Activated T-helper 2 cell treated with anti-CD3 and anti-CD28 coated beads, Interferon-gamma antibody, Interleukin-2, Interleukin-4, amounts not matched to agents 10 μg/mL and 5 μg/mL and 100 μg/mL, durations not matched to agents 14 hours and 24 hours and 36 hours (primary cell): ENCODE measurements at regions of chr6 and their contacts with region 1.

Region 1: DNA sequence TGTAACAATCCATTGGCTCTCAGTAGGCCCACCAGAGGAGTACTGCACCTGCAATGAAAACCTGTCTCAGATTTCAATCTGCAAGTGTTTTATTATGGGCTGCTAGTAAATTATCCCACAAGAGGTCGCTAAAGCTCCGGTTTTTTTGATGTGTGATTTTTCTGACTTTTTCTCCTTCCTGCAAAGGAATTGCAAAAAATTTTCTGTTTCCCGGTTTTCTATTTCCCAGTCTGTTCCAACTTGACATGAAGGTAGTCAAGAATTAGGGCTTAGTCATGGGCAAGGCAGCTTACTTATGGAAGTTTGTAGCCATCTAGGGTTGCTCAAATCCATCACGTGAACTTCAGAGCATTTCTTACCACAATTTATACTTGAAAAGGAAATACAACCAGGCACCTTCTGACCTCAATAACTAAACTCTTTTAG is 38.5 kb upstream of the AHI1 start:
- DNase-seq: peak; percentile 20
- H3K4me3 Mint-ChIP-seq: peak overlapping the region; percentile 28
- H3K27ac Mint-ChIP-seq: peak overlapping the region; percentile 78
- H3K4me1 Mint-ChIP-seq: peaks cover 56% of the 10 kb centered on the region
- H3K27me3 Mint-ChIP-seq: no peaks in the 10 kb centered on the region

Region 2: DNA sequence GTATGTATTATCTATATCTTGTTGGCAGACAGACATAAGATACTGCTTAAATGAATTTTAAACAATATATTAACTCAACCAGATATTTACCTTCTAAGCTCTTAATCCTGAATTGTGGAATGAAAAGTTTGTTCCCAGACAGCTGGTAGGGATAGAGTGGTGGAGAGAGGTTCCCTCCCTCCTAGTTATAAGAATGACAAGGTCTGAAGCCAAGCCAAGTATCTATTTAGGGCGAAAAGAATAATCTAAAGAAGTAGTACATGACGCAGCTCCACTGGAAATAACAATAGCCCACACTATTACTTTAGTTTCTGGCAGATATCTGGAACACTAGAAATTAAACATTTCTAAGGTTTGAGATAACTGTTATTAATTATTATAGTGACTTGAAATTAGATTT is 142.7 kb before region 1 on chr6:
- intact Hi-C with region 1: no loop called
- DNase-seq: no peak
- H3K4me3 Mint-ChIP-seq: no peak overlapping the region
- H3K27ac Mint-ChIP-seq: no peak overlapping the region
- H3K4me1 Mint-ChIP-seq: no peaks in the 10 kb centered on the region
- H3K27me3 Mint-ChIP-seq: no peaks in the 10 kb centered on the region

Region 3: DNA sequence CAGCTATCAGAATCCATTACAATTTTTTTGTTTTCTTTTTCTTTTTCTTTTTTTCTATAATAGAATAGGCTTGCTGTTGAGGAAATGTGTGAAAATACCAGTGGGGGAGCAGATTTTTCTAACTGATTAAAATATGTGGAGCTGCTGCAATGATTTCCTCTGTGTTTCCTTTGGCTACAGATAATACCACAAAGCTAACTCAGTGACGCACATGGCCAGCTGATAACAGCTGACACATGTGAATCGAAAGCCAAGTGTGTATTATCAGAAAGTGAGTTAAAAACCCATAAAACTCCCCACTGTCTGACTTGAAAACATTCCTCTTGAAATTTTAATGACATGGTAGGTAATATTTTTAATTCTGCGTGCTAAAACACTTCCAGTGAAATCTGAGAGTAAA is 32.4 kb after region 1 on chr6:
- intact Hi-C with region 1: loop called (anchors 1 kb)
- DNase-seq: peak; percentile 66
- H3K4me3 Mint-ChIP-seq: no peak overlapping the region
- H3K27ac Mint-ChIP-seq: peak overlapping the region; percentile 94
- H3K4me1 Mint-ChIP-seq: peaks cover 71% of the 10 kb centered on the region
- H3K27me3 Mint-ChIP-seq: no peaks in the 10 kb centered on the region

Region 4: GRCh38 chr6:135624402-135625295 is 88.6 kb after region 1 on chr6:
- intact Hi-C with region 1: loop called (anchors 1 kb)
- DNase-seq: peak; percentile 37
- H3K4me3 Mint-ChIP-seq: peak overlapping the region; percentile 20
- H3K27ac Mint-ChIP-seq: peak overlapping the region; percentile 98
- H3K4me1 Mint-ChIP-seq: peaks cover 69% of the 10 kb centered on the region
- H3K27me3 Mint-ChIP-seq: no peaks in the 10 kb centered on the region

Region 5: GRCh38 chr6:135675862-135676261 is 139.9 kb after region 1 on chr6:
- intact Hi-C with region 1: loop called (anchors 1 kb)
- DNase-seq: peak; percentile 17
- H3K4me3 Mint-ChIP-seq: no peak overlapping the region
- H3K27ac Mint-ChIP-seq: peak overlapping the region; percentile 75
- H3K4me1 Mint-ChIP-seq: peaks cover 41% of the 10 kb centered on the region
- H3K27me3 Mint-ChIP-seq: no peaks in the 10 kb centered on the region

Region 6: GRCh38 chr6:135922174-135922573 is 386.2 kb after region 1 on chr6:
- intact Hi-C with region 1: loop called (anchors 5 kb)
- DNase-seq: no peak
- H3K4me3 Mint-ChIP-seq: peak overlapping the region; percentile 30
- H3K27ac Mint-ChIP-seq: peak overlapping the region; percentile 80
- H3K4me1 Mint-ChIP-seq: peaks cover 43% of the 10 kb centered on the region
- H3K27me3 Mint-ChIP-seq: no peaks in the 10 kb centered on the region